B cell (primary cell): ENCODE measurements at regions of chr12 and their contacts with region 1.

Region 1: GRCh38 chr12:50924439-50925341 is 27.7 kb upstream of the HIGD1C start:
- DNase-seq: peak; percentile 83
- ATAC-seq: peak; percentile 94
- H3K4me3 ChIP-seq: peak overlapping the region; percentile 75 to 99 (median 88)
- H3K4me3 Mint-ChIP-seq: peak overlapping the region; percentile 96
- H3K27ac ChIP-seq: peak overlapping the region; percentile 81 to 91
- H3K27ac Mint-ChIP-seq: peak overlapping the region; percentile 98
- H3K4me1 ChIP-seq: peaks cover 43 to 44% of the 10 kb centered on the region in 2 donors
- H3K4me1 Mint-ChIP-seq: peaks cover 63% of the 10 kb centered on the region
- H3K27me3 ChIP-seq: no peaks in the 10 kb centered on the region
- H3K27me3 Mint-ChIP-seq: no peaks in the 10 kb centered on the region
- CTCF ChIP-seq: no peak

Region 2: DNA sequence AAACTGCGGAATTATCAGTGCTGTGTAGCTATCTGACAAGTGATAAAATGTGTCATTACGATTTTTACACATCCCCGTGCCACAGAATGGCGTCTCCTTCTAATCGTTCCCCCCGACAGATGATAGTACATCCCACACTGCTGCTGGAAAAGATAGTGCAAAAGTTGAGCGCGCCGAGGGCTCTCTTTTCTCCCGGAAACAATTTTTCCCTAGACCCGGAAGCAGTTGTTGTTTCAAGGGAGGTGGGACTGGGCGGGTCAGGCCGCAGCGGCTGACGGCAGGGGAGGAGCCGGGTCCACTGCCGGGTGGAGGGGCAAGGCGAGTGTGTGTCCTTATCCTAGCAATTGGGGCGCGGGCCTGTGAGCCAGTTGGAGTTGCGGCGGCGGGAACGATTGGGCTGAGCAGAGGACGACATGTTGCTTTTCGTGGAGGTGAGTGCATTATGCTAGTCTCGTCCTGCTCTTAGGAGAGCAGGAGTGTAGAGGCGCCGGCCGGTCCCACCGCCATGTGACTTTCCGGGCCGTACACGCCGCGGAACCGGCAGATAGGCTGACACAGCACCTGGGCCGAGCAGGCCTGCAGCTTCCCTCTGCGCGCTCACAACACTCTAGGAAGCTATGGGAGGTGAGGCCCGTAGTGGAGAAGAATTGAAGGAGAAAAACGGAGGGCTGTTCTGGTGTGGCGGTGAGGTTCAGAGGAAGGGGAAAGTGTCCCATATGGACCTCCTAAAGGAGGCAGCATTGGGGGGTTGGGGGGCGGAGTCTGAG is 523.9 kb before region 1 on chr12 and contains the start of gene LARP4:
- CTCF ChIA-PET with region 1: no interaction called
- POLR2A ChIA-PET with region 1: no interaction called
- intact Hi-C with region 1: loop called (anchors 10 kb)
- DNase-seq: peak; percentile 93
- ATAC-seq: peak; percentile 94
- H3K4me3 ChIP-seq: peak within 1 kb of the TSS; percentile 53 to 90 (median 81)
- H3K4me3 Mint-ChIP-seq: peak within 1 kb of the TSS; percentile 92
- H3K27ac ChIP-seq: peak within 1 kb of the TSS; percentile 62 to 88
- H3K27ac Mint-ChIP-seq: peak within 1 kb of the TSS; percentile 93
- H3K4me1 ChIP-seq: peaks cover 22 to 24% of the 10 kb centered on the region in 2 donors
- H3K4me1 Mint-ChIP-seq: peaks cover 38% of the 10 kb centered on the region
- H3K27me3 ChIP-seq: no peaks in the 10 kb centered on the region
- H3K27me3 Mint-ChIP-seq: peaks cover 9% of the 10 kb centered on the region
- CTCF ChIP-seq: no peak
- total RNA-seq, gene LARP4: 42.0 and 48.4 TPM in 2 replicates

Region 3: GRCh38 chr12:50894241-50894640 is 30.4 kb before region 1 on chr12:
- CTCF ChIA-PET with region 1: no interaction called
- POLR2A ChIA-PET with region 1: interaction called, 3 read pairs
- intact Hi-C with region 1: loop called (anchors 2 kb)
- DNase-seq: no peak
- ATAC-seq: no peak
- H3K4me3 ChIP-seq: no peak overlapping the region
- H3K4me3 Mint-ChIP-seq: no peak overlapping the region
- H3K27ac ChIP-seq: no peak overlapping the region
- H3K27ac Mint-ChIP-seq: no peak overlapping the region
- H3K4me1 ChIP-seq: peaks cover 6% of the 10 kb centered on the region in 2 donors
- H3K4me1 Mint-ChIP-seq: peaks cover 8% of the 10 kb centered on the region
- H3K27me3 ChIP-seq: no peaks in the 10 kb centered on the region
- H3K27me3 Mint-ChIP-seq: no peaks in the 10 kb centered on the region
- CTCF ChIP-seq: no peak

Region 4: GRCh38 chr12:50986966-50987737 is 62.5 kb after region 1 on chr12:
- CTCF ChIA-PET with region 1: interaction called, 94 read pairs
- POLR2A ChIA-PET with region 1: interaction called, 3 read pairs
- intact Hi-C with region 1: loop called (anchors 2 kb)
- DNase-seq: peak; percentile 65
- ATAC-seq: peak; percentile 80
- H3K4me3 ChIP-seq: no peak overlapping the region
- H3K4me3 Mint-ChIP-seq: no peak overlapping the region
- H3K27ac ChIP-seq: no peak overlapping the region
- H3K27ac Mint-ChIP-seq: no peak overlapping the region
- H3K4me1 ChIP-seq: peaks cover 0 to 2% of the 10 kb centered on the region in 2 donors
- H3K4me1 Mint-ChIP-seq: peaks cover 6% of the 10 kb centered on the region
- H3K27me3 ChIP-seq: no peaks in the 10 kb centered on the region
- H3K27me3 Mint-ChIP-seq: no peaks in the 10 kb centered on the region
- CTCF ChIP-seq: peak; percentile 40

Region 5: DNA sequence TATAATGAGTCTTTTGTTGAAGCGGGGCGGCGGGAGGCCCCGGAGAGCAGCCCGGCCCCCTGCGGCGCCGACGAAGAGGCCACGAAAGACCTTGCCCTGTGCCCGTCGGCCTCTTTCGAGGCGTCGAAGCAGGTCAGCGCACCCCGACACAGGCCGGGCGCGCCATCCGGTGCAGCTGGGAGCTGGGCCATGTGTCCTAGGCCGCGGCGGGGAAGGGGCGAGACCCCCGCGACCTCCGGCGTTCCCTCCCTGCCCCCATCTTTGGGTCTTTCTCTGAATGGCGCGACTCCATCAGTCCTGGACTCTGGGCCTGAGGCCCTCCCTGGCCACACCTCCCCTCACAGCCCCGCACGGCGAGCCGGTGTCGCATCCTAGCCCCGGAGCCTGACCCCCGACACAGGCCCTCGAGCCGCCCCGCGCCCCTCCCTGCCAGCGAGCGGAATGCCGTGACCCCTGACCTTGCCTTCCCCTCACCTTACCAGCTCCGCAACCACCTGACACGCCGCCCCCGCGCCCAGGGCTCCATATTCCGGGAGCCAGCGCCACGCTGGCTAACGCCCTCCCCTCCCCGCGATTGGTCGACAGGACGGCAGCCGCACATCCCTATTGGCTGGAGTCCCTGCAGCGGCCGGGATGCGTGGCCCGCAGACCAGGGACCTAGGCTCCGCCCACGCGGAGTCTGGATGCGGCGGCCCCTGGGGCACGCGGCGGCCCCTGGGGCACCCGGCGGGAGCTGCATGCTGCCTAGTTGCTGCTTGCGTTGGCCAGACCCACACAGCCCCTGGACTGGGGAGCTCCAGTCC is 101.3 kb after region 1 on chr12 and contains the start of gene SLC11A2:
- CTCF ChIA-PET with region 1: no interaction called
- POLR2A ChIA-PET with region 1: no interaction called
- intact Hi-C with region 1: loop called (anchors 1 kb)
- DNase-seq: peak; percentile 92
- ATAC-seq: peak; percentile 98
- H3K4me3 ChIP-seq: peak within 1 kb of the TSS; percentile 34 to 97 (median 78)
- H3K4me3 Mint-ChIP-seq: peak within 1 kb of the TSS; percentile 94
- H3K27ac ChIP-seq: peak within 1 kb of the TSS; percentile 71 to 74
- H3K27ac Mint-ChIP-seq: peak within 1 kb of the TSS; percentile 93
- H3K4me1 ChIP-seq: peaks cover 13 to 28% of the 10 kb centered on the region in 2 donors
- H3K4me1 Mint-ChIP-seq: peaks cover 36% of the 10 kb centered on the region
- H3K27me3 ChIP-seq: peaks cover 0 to 3% (median 0%) of the 10 kb centered on the region in 4 experiments
- H3K27me3 Mint-ChIP-seq: peaks cover 4% of the 10 kb centered on the region
- CTCF ChIP-seq: no peak
- total RNA-seq, gene SLC11A2: 42.0 and 45.7 TPM in 2 replicates

Region 6: GRCh38 chr12:51773145-51773867 is 848.6 kb after region 1 on chr12:
- CTCF ChIA-PET with region 1: no interaction called
- POLR2A ChIA-PET with region 1: no interaction called
- intact Hi-C with region 1: no loop called
- DNase-seq: no peak
- ATAC-seq: no peak
- H3K4me3 ChIP-seq: no peak overlapping the region
- H3K4me3 Mint-ChIP-seq: no peak overlapping the region
- H3K27ac ChIP-seq: no peak overlapping the region
- H3K27ac Mint-ChIP-seq: no peak overlapping the region
- H3K4me1 ChIP-seq: no peaks in the 10 kb centered on the region
- H3K4me1 Mint-ChIP-seq: no peaks in the 10 kb centered on the region
- H3K27me3 ChIP-seq: peaks cover 0 to 4% (median 0%) of the 10 kb centered on the region in 4 experiments
- H3K27me3 Mint-ChIP-seq: peaks cover 7% of the 10 kb centered on the region
- CTCF ChIP-seq: no peak